GM12878 (cell line): ENCODE measurements at regions of chr6 and their contacts with region 1.

Region 1: GRCh38 chr6:84575264-84575663 is 189.1 kb downstream of the TBX18 start:
- DNase-seq: peak; percentile 61
- ATAC-seq: peak; percentile 99
- H3K4me3 ChIP-seq: no peak overlapping the region
- H3K27ac ChIP-seq: no peak overlapping the region
- H3K4me1 ChIP-seq: no peaks in the 10 kb centered on the region; the same call in 1 of the 2 replicates
- H3K27me3 ChIP-seq: no peaks in the 10 kb centered on the region
- CTCF ChIP-seq: no peak
- EP300 ChIP-seq: peak; percentile 96 to 98
- POLR2A ChIP-seq: no peak
- RAD21 ChIP-seq: no peak

Region 2: GRCh38 chr6:84546427-84546914 is 28.8 kb before region 1 on chr6:
- CTCF ChIA-PET with region 1: interaction called, 5 read pairs
- POLR2A ChIA-PET with region 1: interaction called, 4 read pairs
- RAD21 ChIA-PET with region 1: interaction called, 15 read pairs
- SMC1A ChIA-PET with region 1: interaction called, 40 read pairs
- in situ Hi-C with region 1: no loop called
- intact Hi-C with region 1: loop called (anchors 1 kb)
- DNase-seq: peak; percentile 52
- ATAC-seq: peak; percentile 87
- H3K4me3 ChIP-seq: no peak overlapping the region
- H3K27ac ChIP-seq: no peak overlapping the region
- H3K4me1 ChIP-seq: no peaks in the 10 kb centered on the region
- H3K27me3 ChIP-seq: no peaks in the 10 kb centered on the region
- CTCF ChIP-seq: no peak
- EP300 ChIP-seq: peak; percentile 84 to 90
- POLR2A ChIP-seq: no peak
- RAD21 ChIP-seq: no peak

Region 3: GRCh38 chr6:84774157-84774984 is 199.1 kb after region 1 on chr6:
- CTCF ChIA-PET with region 1: no interaction called
- POLR2A ChIA-PET with region 1: no interaction called
- RAD21 ChIA-PET with region 1: no interaction called
- SMC1A ChIA-PET with region 1: no interaction called
- in situ Hi-C with region 1: no loop called
- intact Hi-C with region 1: loop called (anchors 5 kb)
- DNase-seq: no peak
- ATAC-seq: peak; percentile 90
- H3K4me3 ChIP-seq: no peak overlapping the region
- H3K27ac ChIP-seq: no peak overlapping the region
- H3K4me1 ChIP-seq: no peaks in the 10 kb centered on the region
- H3K27me3 ChIP-seq: peaks cover 2 to 4% of the 10 kb centered on the region in 2 experiments
- CTCF ChIP-seq: peak; percentile 17 to 44 (median 39); a peak in 4 of 6 replicates
- EP300 ChIP-seq: no peak
- POLR2A ChIP-seq: no peak
- RAD21 ChIP-seq: no peak